Ovary (tissue), 10 donors: ENCODE measurements at regions of chr5 and their contacts with region 1.

Region 1: DNA sequence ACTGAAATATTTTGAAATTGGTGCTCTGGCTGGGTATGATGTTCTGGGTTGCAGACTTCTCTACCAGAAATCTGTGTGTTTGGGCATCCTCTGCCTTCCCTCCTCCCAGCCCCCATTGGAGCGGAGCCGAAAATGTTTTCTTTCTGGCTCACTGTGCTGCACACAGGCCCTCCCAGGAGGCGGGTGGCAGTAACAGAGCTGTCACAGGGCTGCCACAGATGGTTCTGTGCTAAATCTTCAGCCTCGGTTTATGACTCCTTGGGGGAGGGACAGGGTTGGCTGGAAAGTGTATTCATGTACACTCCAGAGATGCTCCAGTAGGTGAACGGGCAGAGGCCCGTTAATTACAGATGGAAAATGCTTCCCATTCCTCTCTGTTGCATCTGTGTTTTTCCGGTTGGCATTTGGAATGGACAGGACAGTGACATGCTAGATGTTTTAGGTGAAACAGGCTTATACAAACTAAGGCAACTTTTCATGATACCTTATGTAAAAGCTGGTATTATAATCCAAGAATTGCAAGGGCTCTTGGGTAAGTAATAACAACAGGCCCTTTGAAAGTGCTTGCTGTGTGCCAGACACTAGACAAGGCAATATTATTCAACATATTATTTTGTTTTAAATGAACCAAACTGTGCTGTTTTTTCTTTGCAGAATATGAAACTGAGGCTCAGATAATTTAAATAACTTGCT is 180.2 kb downstream of the ADCY2 start:
- DNase-seq: no peak
- H3K4me3 ChIP-seq: no peak overlapping the region
- H3K27ac ChIP-seq: no peak overlapping the region
- H3K4me1 ChIP-seq: no peaks in the 10 kb centered on the region
- H3K27me3 ChIP-seq: no peaks in the 10 kb centered on the region
- CTCF ChIP-seq: no peak
- EP300 ChIP-seq: no peak
- POLR2A ChIP-seq: no peak

Region 2: GRCh38 chr5:6659941-6660684 is 916.1 kb before region 1 on chr5:
- intact Hi-C with region 1: loop called in 1 of 4 experiments (anchors 5 kb)
- DNase-seq: no peak
- H3K4me3 ChIP-seq: no peak overlapping the region
- H3K27ac ChIP-seq: no peak overlapping the region
- H3K4me1 ChIP-seq: no peaks in the 10 kb centered on the region
- H3K27me3 ChIP-seq: no peaks in the 10 kb centered on the region
- CTCF ChIP-seq: no peak
- EP300 ChIP-seq: no peak
- POLR2A ChIP-seq: no peak